SK-N-SH (cell line): ENCODE measurements at regions of chr22 and their contacts with region 1.

Region 1: DNA sequence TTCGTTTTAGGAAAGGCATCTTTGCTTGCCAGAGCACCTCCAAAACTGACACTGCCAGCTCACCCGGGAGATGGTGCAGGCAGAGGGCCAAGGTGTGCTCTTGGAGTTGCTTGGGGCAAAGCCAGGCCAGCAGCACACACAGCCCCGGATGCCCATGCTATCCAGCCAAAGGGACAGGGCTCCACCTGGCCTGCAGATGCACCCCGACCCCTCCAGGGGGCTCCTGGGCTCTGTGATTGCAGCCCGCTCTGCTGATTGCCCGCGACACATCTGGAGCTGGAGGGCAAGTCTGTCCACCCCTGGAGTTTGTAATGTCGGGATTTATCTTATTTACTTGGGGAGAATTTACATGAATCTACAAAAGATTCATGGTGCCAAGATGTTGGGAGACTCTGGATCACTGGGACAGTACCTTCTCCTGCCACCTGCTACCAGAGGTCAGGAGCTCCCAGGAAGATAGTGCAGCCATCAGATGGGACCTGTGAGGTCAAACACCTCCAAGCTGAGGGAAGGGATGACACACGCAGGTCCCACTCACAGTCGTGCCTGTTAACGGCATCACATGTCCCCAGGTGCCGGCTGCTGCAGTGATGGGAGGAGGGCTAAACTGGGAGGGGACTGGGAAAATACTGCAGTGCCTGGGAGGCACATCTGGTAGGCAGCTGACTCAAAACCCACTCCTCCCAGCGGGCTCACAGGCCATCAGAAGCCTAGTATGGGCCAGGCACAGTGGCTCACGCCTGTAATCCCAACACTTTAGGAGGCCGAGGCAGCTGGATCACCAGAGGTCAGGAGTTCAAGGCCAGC is 17.2 kb downstream of the CBX7 start:
- DNase-seq: peak; percentile 90
- H3K4me3 ChIP-seq: no peak overlapping the region
- H3K27ac ChIP-seq: no peak overlapping the region; a peak in 1 of 4 replicates
- H3K4me1 ChIP-seq: peaks cover 0 to 9% of the 10 kb centered on the region in 2 experiments; a peak in 1 of 4 replicates
- H3K27me3 ChIP-seq: no peaks in the 10 kb centered on the region
- CTCF ChIP-seq: peak; percentile 47
- EP300 ChIP-seq: no peak
- RAD21 ChIP-seq: peak; percentile 62

Region 2: GRCh38 chr22:38973289-38974169 is 161.8 kb before region 1 on chr22:
- CTCF ChIA-PET with region 1: no interaction called
- POLR2A ChIA-PET with region 1: no interaction called
- DNase-seq: no peak
- H3K4me3 ChIP-seq: no peak overlapping the region
- H3K27ac ChIP-seq: no peak overlapping the region
- H3K4me1 ChIP-seq: no peaks in the 10 kb centered on the region
- H3K27me3 ChIP-seq: no peaks in the 10 kb centered on the region
- CTCF ChIP-seq: no peak
- EP300 ChIP-seq: no peak
- RAD21 ChIP-seq: no peak

Region 3: DNA sequence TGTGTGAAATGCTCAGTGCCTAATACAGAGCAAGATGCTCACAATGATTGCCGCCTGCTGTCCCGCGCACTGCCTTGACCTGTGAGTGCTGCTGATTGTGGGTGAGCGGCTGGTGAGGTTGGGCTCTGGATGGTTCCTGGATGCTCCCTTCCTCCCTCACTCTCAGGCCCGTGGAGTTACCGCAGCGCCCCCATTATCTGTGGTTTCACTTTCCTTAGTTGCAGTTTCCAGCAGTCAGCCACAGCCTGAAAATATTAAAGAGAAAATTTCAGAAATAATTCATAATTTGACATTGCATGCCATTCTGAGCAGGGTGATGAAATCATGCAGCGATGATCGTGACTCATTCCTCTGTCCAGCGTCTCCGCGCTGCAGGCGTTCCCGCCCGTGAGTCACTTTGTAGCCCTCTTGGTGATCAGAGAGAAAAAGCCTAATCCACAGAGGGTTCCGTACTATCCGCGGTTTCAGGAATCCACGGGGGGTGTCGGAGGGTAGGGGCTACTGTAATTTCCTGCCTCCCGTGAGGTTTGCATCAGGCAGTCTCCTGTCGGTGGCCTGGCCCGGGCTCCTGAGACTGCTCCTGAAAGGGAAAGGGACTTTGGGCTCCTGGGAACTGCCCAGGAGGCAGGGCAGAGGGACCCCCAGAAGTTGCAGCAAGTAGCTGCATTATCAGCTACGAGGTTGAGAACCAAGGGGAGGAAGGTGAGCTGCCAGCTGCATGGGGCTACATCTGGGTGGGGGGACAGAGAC is 173.5 kb after region 1 on chr22:
- CTCF ChIA-PET with region 1: interaction called, 11 read pairs
- POLR2A ChIA-PET with region 1: interaction called, 4 read pairs
- DNase-seq: no peak
- H3K4me3 ChIP-seq: no peak overlapping the region
- H3K27ac ChIP-seq: peak overlapping the region in 1 of 2 experiments; percentile 72; a peak in 3 of 4 replicates
- H3K4me1 ChIP-seq: no peaks in the 10 kb centered on the region; a peak in 2 of 4 replicates
- H3K27me3 ChIP-seq: no peaks in the 10 kb centered on the region
- CTCF ChIP-seq: peak; percentile 31
- EP300 ChIP-seq: peak in 1 of 2 experiments; percentile 47; a peak in 1 of 4 replicates
- RAD21 ChIP-seq: no peak